Activated naive CD4-positive, alpha-beta T cell treated with anti-CD3 and anti-CD28 coated beads for 36 hours (primary cell): ENCODE measurements at regions of chr7 and their contacts with region 1.

Region 1: DNA sequence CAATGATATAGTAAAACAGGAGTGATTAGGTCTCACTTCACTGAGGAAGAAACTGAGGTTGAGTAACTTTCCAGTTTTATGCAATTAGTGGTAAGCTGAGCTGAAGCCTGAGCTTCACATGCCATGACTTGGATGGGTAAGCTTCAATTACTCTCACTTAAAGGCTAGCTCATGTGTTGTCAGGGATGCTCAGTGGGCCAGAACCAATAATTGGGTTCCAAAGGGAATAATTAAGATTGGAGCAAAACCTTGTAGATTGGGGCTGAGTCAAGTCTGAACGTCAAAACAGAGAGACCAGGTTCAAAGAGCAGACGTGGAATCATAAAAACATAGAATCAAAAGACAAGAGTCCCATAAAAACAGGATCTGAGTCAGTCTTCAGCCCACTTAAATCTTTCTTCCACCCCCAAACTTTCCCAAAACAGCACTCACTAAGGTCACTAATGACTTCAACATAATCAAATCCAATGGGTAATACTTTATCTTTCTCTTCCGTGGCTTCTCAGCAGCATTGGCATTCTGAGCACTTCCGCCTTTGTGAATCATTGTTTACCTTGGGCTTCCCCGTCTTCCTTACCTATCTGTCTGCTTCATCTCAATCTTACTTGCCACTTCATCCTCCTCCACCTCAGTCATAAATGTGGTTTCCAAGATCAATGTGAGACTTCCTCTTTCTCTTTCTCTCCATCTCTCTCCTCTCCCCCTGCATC is 23.0 kb upstream of the EGFR start:
- DNase-seq: peak; percentile 59
- H3K4me3 Mint-ChIP-seq: no peak overlapping the region
- H3K27ac Mint-ChIP-seq: peak overlapping the region; percentile 87
- H3K4me1 Mint-ChIP-seq: peaks cover 25% of the 10 kb centered on the region
- H3K27me3 Mint-ChIP-seq: peaks cover 5% of the 10 kb centered on the region

Region 2: GRCh38 chr7:54802841-54803240 is 192.9 kb before region 1 on chr7:
- CTCF ChIA-PET with region 1: no interaction called
- intact Hi-C with region 1: loop called (anchors 1 kb)
- DNase-seq: peak; percentile 58
- H3K4me3 Mint-ChIP-seq: no peak overlapping the region
- H3K27ac Mint-ChIP-seq: no peak overlapping the region
- H3K4me1 Mint-ChIP-seq: no peaks in the 10 kb centered on the region
- H3K27me3 Mint-ChIP-seq: peaks cover 9% of the 10 kb centered on the region

Region 3: DNA sequence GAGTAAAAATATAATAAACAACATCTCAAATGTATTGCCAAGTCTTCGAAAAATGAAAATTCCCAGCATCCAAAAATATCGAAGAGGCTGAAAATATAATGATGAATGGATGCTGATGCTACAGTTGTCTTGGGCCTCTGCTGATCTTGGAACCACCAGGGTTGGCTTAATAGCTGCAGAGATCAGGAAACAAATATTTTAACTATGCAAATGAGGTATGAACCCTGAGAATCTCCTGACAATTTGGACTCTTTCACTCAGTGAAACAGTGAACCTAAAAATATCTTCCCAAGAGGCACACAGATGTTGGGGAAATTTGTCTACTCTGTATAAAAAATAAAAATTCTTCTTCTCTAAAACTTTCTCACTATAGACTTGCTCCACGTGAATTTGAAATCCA is 74.7 kb before region 1 on chr7:
- CTCF ChIA-PET with region 1: no interaction called
- intact Hi-C with region 1: no loop called
- DNase-seq: no peak
- H3K4me3 Mint-ChIP-seq: no peak overlapping the region
- H3K27ac Mint-ChIP-seq: no peak overlapping the region
- H3K4me1 Mint-ChIP-seq: no peaks in the 10 kb centered on the region
- H3K27me3 Mint-ChIP-seq: peaks cover 4% of the 10 kb centered on the region

Region 4: GRCh38 chr7:55043451-55044370 is 47.9 kb after region 1 on chr7:
- CTCF ChIA-PET with region 1: no interaction called
- intact Hi-C with region 1: no loop called
- DNase-seq: no peak
- H3K4me3 Mint-ChIP-seq: no peak overlapping the region
- H3K27ac Mint-ChIP-seq: no peak overlapping the region
- H3K4me1 Mint-ChIP-seq: no peaks in the 10 kb centered on the region
- H3K27me3 Mint-ChIP-seq: peaks cover 2% of the 10 kb centered on the region

Region 5: GRCh38 chr7:55086413-55087201 is 90.8 kb after region 1 on chr7:
- CTCF ChIA-PET with region 1: no interaction called
- intact Hi-C with region 1: loop called (anchors 2 kb)
- DNase-seq: peak; percentile 27
- H3K4me3 Mint-ChIP-seq: no peak overlapping the region
- H3K27ac Mint-ChIP-seq: no peak overlapping the region
- H3K4me1 Mint-ChIP-seq: peaks cover 14% of the 10 kb centered on the region
- H3K27me3 Mint-ChIP-seq: peaks cover 11% of the 10 kb centered on the region